ENCODE measurements at regions of chr21 and their contacts with region 1.

Region 1: DNA sequence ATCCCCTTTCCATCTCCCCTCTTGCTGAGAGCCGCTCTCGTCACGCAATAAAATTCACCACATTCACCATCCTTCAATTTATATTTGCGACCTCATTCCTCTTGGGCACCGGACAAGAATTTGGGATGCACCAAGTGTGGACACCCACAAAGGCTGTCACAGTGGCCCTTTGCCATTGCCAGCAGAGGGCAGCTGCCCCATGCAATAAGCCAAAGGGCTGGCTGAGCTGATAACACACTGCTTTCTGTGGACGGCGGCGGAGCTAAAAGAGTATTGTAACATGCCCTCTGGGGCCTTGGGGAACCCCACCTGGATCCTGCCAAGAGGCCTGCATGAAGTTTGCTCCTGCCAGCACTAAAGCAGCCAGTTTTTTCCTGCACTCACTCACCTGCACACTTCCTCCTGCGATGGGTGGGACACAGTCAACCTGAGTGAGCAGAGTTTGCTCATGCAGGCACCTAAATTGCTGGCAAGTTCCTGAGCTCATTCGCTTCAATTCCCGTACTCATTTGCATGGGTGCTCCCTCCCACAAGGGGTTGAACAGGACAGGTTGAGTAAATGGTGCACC is 792.3 kb upstream of the ADAMTS5 start:
- DNase-seq: peak; percentile 18 to 27
- ATAC-seq: peak in 6 of 8 donors; percentile 64 to 83 (median 76)
- H3K4me3 ChIP-seq: no peak overlapping the region
- H3K27ac ChIP-seq: no peak overlapping the region
- H3K4me1 ChIP-seq: peaks cover 0 to 14% (median 7%) of the 10 kb centered on the region in 9 donors
- H3K27me3 ChIP-seq: no peaks in the 10 kb centered on the region
- CTCF ChIP-seq: peak in 8 of 9 donors; percentile 37 to 63 (median 52)

Region 2: GRCh38 chr21:27590271-27590670 is 168.9 kb before region 1 on chr21:
- intact Hi-C with region 1: no loop called
- DNase-seq: peak; percentile 14 to 36
- ATAC-seq: peak in 7 of 8 donors; percentile 66 to 94 (median 76)
- H3K4me3 ChIP-seq: no peak overlapping the region
- H3K27ac ChIP-seq: peak overlapping the region in 2 of 10 donors; percentile 4 to 45
- H3K4me1 ChIP-seq: peaks cover 0 to 9% (median 0%) of the 10 kb centered on the region in 9 donors
- H3K27me3 ChIP-seq: no peaks in the 10 kb centered on the region
- CTCF ChIP-seq: no peak

Region 3: DNA sequence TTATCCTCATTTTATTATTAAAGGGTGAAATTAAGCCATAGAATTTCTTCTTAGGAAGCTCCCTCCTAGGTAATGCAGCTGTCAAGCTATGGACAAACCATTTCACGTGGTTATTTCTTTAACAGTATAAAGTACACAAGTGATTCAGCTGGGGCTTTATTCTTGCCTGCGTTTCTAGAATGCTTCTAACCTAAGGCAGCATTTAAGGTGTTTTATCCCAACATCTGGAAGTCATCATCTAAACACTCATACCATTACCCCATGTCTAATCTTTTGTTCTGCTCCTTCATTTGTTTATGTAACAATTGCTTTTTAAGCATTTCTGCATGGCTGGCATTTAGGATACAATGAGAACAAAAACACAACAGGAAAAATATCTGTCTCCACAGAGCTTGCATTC is 36.9 kb after region 1 on chr21:
- intact Hi-C with region 1: loop called in 2 of 10 experiments (anchors 5 kb)
- DNase-seq: no peak
- ATAC-seq: no peak
- H3K4me3 ChIP-seq: no peak overlapping the region
- H3K27ac ChIP-seq: no peak overlapping the region
- H3K4me1 ChIP-seq: peaks cover 0 to 5% (median 0%) of the 10 kb centered on the region in 9 donors
- H3K27me3 ChIP-seq: no peaks in the 10 kb centered on the region
- CTCF ChIP-seq: no peak

Region 4: GRCh38 chr21:27802816-27803475 is 43.8 kb after region 1 on chr21:
- intact Hi-C with region 1: loop called in 2 of 10 experiments (anchors 5 kb)
- DNase-seq: peak in 1 of 2 donors; percentile 36
- ATAC-seq: peak in 2 of 8 donors; percentile 37 to 38
- H3K4me3 ChIP-seq: no peak overlapping the region
- H3K27ac ChIP-seq: no peak overlapping the region
- H3K4me1 ChIP-seq: peaks cover 0 to 15% (median 0%) of the 10 kb centered on the region in 9 donors
- H3K27me3 ChIP-seq: no peaks in the 10 kb centered on the region
- CTCF ChIP-seq: peak; percentile 19 to 75 (median 60)

Region 5: GRCh38 chr21:27831816-27832569 is 72.8 kb after region 1 on chr21:
- intact Hi-C with region 1: no loop called
- DNase-seq: no peak
- ATAC-seq: no peak
- H3K4me3 ChIP-seq: no peak overlapping the region
- H3K27ac ChIP-seq: no peak overlapping the region
- H3K4me1 ChIP-seq: no peaks in the 10 kb centered on the region
- H3K27me3 ChIP-seq: no peaks in the 10 kb centered on the region
- CTCF ChIP-seq: no peak